ENCODE measurements at regions of chr16 and their contacts with region 1.

Region 1: DNA sequence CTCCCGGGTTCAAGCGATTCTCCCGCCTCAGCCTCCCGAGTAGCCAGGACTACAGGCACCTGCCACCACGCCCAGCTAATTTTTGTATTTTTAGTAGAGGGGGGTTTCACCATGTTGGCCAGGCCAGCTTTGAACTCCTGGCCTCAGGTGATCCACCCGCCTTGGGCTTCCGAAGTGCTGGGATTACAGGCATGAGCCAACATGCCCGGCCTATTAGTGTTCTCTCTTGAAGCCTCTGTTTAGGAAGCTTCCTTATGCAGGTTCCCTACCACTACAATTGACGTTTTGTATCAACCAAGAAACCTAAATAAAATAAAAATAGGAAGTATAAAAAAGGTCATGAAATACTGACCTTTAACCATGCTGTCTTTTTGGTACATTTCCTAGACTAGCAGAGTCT is 16.0 kb downstream of the CHST5 start:
- DNase-seq: no peak
- ATAC-seq: no peak
- H3K4me3 Mint-ChIP-seq: no peak overlapping the region
- H3K27ac Mint-ChIP-seq: no peak overlapping the region
- H3K4me1 Mint-ChIP-seq: peaks cover 13% of the 10 kb centered on the region
- H3K27me3 Mint-ChIP-seq: no peaks in the 10 kb centered on the region

Region 2: GRCh38 chr16:75471723-75472633 is 47.9 kb before region 1 on chr16:
- CTCF ChIA-PET with region 1: interaction called, 17 read pairs
- POLR2A ChIA-PET with region 1: no interaction called
- DNase-seq: peak; percentile 52
- ATAC-seq: peak; percentile 80
- H3K4me3 Mint-ChIP-seq: no peak overlapping the region
- H3K27ac Mint-ChIP-seq: no peak overlapping the region
- H3K4me1 Mint-ChIP-seq: no peaks in the 10 kb centered on the region
- H3K27me3 Mint-ChIP-seq: no peaks in the 10 kb centered on the region

Region 3: DNA sequence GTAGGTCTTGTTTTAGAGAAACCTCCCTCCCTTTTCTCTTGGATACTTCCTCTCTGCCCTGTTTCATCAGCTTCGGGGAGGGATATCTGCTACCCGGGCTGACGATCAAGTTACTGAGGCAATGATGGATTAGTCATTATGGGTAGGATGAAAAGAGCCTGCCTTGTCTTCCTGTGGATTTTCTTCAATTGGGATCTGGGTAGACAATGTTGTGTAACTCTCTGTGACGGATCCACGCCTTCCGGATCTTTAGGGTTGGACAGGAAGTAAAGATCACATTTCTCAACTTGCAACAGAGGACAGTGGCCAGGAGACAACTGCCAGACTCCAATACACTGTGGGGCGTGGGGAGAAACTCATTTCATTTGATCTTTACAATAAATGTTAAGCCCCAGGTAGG is 13.3 kb before region 1 on chr16:
- CTCF ChIA-PET with region 1: interaction called, 11 read pairs
- POLR2A ChIA-PET with region 1: no interaction called
- DNase-seq: no peak
- ATAC-seq: no peak
- H3K4me3 Mint-ChIP-seq: no peak overlapping the region
- H3K27ac Mint-ChIP-seq: no peak overlapping the region
- H3K4me1 Mint-ChIP-seq: no peaks in the 10 kb centered on the region
- H3K27me3 Mint-ChIP-seq: peaks cover 25% of the 10 kb centered on the region

Region 4: DNA sequence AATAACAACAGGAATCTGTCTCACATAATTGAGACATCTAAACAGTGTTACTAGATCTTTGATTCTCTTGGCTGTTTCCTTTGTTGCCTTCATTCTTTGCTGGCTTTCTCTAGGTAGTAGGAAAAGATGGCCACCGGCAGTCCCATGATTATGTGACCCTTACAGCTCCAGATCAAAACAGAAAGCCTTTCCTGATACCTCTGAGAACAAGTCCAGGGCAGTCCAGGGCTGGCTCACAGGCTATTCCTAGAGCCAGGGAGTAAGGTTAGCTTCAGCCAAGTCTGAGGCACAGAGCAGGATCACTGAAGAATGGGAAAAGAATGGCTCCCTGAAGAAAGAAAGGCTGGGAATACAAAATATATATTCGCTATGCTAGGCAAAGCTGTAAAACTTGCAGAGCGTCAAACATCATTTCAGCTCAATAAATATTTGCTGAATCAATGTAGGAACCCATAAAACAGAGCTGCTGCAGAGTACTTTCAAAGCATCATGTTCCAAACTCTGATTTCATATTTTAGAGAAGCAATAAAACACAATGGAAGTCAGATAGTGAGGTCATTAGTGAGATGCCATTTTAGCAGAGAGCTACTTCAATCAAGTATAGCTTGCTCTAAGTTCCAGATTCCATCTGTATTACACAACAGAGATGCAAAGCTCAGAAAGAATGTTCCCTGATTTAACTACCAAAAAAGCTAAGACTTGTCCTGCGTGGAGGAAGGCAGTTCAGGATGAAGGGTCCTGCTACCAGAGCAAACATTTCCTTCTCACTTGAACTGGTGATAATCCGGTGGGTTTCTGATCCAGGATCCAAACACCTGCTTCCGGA is 79.8 kb after region 1 on chr16:
- CTCF ChIA-PET with region 1: no interaction called
- POLR2A ChIA-PET with region 1: no interaction called
- DNase-seq: no peak
- ATAC-seq: no peak
- H3K4me3 Mint-ChIP-seq: no peak overlapping the region
- H3K27ac Mint-ChIP-seq: no peak overlapping the region
- H3K4me1 Mint-ChIP-seq: peaks cover 5% of the 10 kb centered on the region
- H3K27me3 Mint-ChIP-seq: no peaks in the 10 kb centered on the region

Region 5: DNA sequence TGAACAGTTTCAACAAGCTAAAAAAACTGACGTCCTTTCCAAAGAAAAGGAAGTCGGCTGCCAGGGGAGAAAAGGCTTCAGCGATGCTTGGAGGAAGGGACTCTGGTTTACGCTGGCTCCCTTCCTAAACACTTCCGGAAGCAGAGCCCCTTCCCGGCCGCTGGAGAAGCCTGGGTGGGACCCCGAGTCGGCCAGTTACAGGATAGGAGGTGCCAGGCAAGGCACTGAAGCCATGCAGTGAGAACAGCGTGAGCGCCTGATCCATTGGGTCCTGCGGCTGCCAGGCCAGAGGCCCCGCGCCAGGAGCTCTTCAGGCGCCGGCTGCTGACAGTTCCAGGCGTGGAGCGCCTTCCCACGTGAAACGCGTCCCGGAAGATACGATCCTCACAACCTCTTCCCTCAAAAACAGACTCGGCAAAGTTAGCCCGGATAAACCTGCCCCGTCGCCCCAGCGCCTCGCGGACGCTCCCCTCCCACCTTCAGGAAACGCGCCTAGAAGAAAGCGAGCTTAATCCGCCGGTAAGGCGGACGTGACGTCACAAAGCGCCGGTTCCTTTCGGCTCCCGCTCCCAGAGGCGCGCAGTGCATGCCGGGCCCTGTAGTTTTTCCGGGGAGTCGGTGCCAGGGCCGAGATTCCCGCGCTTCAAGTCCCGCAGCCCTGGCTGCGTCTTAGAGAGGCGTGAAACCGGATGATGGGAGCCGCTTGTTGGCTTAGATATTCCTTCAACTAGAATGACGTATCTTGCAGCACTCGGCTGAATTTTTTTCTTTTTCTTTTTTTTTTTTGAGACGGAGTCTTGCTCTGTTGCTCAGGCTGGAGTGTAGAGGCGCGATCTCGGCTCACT is 103.1 kb after region 1 on chr16 and contains the start of gene ADAT1:
- CTCF ChIA-PET with region 1: interaction called, 20 read pairs
- POLR2A ChIA-PET with region 1: interaction called, 4 read pairs
- DNase-seq: peak; percentile 99
- ATAC-seq: peak; percentile 95
- H3K4me3 Mint-ChIP-seq: peak within 1 kb of the TSS; percentile 93
- H3K27ac Mint-ChIP-seq: peak within 1 kb of the TSS; percentile 98
- H3K4me1 Mint-ChIP-seq: peaks cover 38% of the 10 kb centered on the region
- H3K27me3 Mint-ChIP-seq: no peaks in the 10 kb centered on the region
- total RNA-seq, gene ADAT1: 51.8 to 51.9 TPM

Measured in activated CD8-positive, alpha-beta T cell treated with anti-CD3 and anti-CD28 coated beads, Interleukin-2, amount 10 ng/mL, durations not matched to agents 7 days and 5 days (primary cell).